Activated B cell treated with CpG ODN at 0.5 μM for 24 hours (primary cell): ENCODE measurements at regions of chr13 and their contacts with region 1.

Region 1: DNA sequence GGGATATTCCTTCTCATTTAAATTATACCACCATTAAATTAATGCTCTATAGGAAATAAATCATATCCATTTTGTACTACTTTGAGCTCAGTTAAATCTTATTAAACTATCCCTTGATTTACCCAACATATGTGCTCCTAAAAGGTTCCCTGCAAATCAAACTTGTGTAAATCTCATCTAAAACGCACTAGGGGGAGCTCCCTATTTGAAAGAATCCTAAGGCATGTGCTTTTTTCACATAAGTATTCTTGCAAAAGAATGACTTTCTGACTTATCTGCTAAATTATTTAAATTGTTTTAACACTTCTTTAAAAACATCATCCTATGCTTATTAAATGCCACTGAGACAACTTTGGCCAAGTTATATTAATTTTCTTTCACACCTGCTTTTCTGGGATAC is 7.9 kb downstream of the INTS6 start:
- DNase-seq: no peak
- ATAC-seq: no peak
- H3K4me3 Mint-ChIP-seq: no peak overlapping the region
- H3K27ac Mint-ChIP-seq: no peak overlapping the region
- H3K4me1 Mint-ChIP-seq: peaks cover 6% of the 10 kb centered on the region
- H3K27me3 Mint-ChIP-seq: no peaks in the 10 kb centered on the region
- CTCF ChIP-seq: no peak

Region 2: GRCh38 chr13:51599444-51600176 is 154.7 kb after region 1 on chr13:
- CTCF ChIA-PET with region 1: no interaction called
- POLR2A ChIA-PET with region 1: interaction called, 12 read pairs
- intact Hi-C with region 1: loop called (anchors 5 kb)
- DNase-seq: no peak
- ATAC-seq: no peak
- H3K4me3 Mint-ChIP-seq: no peak overlapping the region
- H3K27ac Mint-ChIP-seq: peak overlapping the region; percentile 68
- H3K4me1 Mint-ChIP-seq: peaks cover 74% of the 10 kb centered on the region
- H3K27me3 Mint-ChIP-seq: no peaks in the 10 kb centered on the region
- CTCF ChIP-seq: no peak

Region 3: GRCh38 chr13:51797664-51798488 is 353.0 kb after region 1 on chr13:
- CTCF ChIA-PET with region 1: interaction called, 38 read pairs
- POLR2A ChIA-PET with region 1: no interaction called
- intact Hi-C with region 1: no loop called
- DNase-seq: no peak
- ATAC-seq: peak; percentile 45
- H3K4me3 Mint-ChIP-seq: no peak overlapping the region
- H3K27ac Mint-ChIP-seq: no peak overlapping the region
- H3K4me1 Mint-ChIP-seq: peaks cover 47% of the 10 kb centered on the region
- H3K27me3 Mint-ChIP-seq: no peaks in the 10 kb centered on the region
- CTCF ChIP-seq: no peak

Region 4: GRCh38 chr13:52001120-52001731 is 556.3 kb after region 1 on chr13:
- CTCF ChIA-PET with region 1: no interaction called
- POLR2A ChIA-PET with region 1: no interaction called
- intact Hi-C with region 1: loop called (anchors 5 kb)
- DNase-seq: no peak
- ATAC-seq: peak; percentile 85
- H3K4me3 Mint-ChIP-seq: no peak overlapping the region
- H3K27ac Mint-ChIP-seq: no peak overlapping the region
- H3K4me1 Mint-ChIP-seq: no peaks in the 10 kb centered on the region
- H3K27me3 Mint-ChIP-seq: peaks cover 6% of the 10 kb centered on the region
- CTCF ChIP-seq: no peak